Endothelial cell of umbilical vein (primary cell): ENCODE measurements at regions of chr17 and their contacts with region 1.

Region 1: GRCh38 chr17:42517516-42517915 is 18.5 kb upstream of the NAGLU start:
- DNase-seq: peak; percentile 90
- H3K4me3 ChIP-seq: no peak overlapping the region
- H3K27ac ChIP-seq: peak overlapping the region; percentile 100
- H3K4me1 ChIP-seq: peaks cover 51% of the 10 kb centered on the region
- H3K27me3 ChIP-seq: no peaks in the 10 kb centered on the region
- CTCF ChIP-seq: peak; percentile 92 to 98
- POLR2A ChIP-seq: peak; percentile 54

Region 2: GRCh38 chr17:42329025-42329976 is 188.2 kb before region 1 on chr17:
- CTCF ChIA-PET with region 1: interaction called, 190 read pairs
- POLR2A ChIA-PET with region 1: no interaction called
- dilution Hi-C with region 1: loop called (anchors 25 kb)
- intact Hi-C with region 1: no loop called
- DNase-seq: peak; percentile 69
- H3K4me3 ChIP-seq: no peak overlapping the region
- H3K27ac ChIP-seq: peak overlapping the region; percentile 35
- H3K4me1 ChIP-seq: peaks cover 14% of the 10 kb centered on the region
- H3K27me3 ChIP-seq: no peaks in the 10 kb centered on the region
- CTCF ChIP-seq: no peak
- POLR2A ChIP-seq: no peak

Region 3: GRCh38 chr17:42405963-42406495 is 111.5 kb before region 1 on chr17:
- CTCF ChIA-PET with region 1: interaction called, 81 read pairs
- POLR2A ChIA-PET with region 1: interaction called, 17 read pairs
- dilution Hi-C with region 1: no loop called
- intact Hi-C with region 1: loop called (anchors 1 kb)
- DNase-seq: peak; percentile 80
- H3K4me3 ChIP-seq: no peak overlapping the region
- H3K27ac ChIP-seq: no peak overlapping the region
- H3K4me1 ChIP-seq: peaks cover 58% of the 10 kb centered on the region
- H3K27me3 ChIP-seq: no peaks in the 10 kb centered on the region
- CTCF ChIP-seq: peak; percentile 75 to 85
- POLR2A ChIP-seq: no peak

Region 4: GRCh38 chr17:42428141-42428944 is 89.2 kb before region 1 on chr17:
- CTCF ChIA-PET with region 1: interaction called, 35 read pairs
- POLR2A ChIA-PET with region 1: interaction called, 38 read pairs
- dilution Hi-C with region 1: no loop called
- intact Hi-C with region 1: loop called (anchors 1 kb)
- DNase-seq: peak; percentile 85
- H3K4me3 ChIP-seq: no peak overlapping the region
- H3K27ac ChIP-seq: no peak overlapping the region
- H3K4me1 ChIP-seq: peaks cover 5% of the 10 kb centered on the region
- H3K27me3 ChIP-seq: no peaks in the 10 kb centered on the region
- CTCF ChIP-seq: peak; percentile 71 to 76
- POLR2A ChIP-seq: no peak

Region 5: DNA sequence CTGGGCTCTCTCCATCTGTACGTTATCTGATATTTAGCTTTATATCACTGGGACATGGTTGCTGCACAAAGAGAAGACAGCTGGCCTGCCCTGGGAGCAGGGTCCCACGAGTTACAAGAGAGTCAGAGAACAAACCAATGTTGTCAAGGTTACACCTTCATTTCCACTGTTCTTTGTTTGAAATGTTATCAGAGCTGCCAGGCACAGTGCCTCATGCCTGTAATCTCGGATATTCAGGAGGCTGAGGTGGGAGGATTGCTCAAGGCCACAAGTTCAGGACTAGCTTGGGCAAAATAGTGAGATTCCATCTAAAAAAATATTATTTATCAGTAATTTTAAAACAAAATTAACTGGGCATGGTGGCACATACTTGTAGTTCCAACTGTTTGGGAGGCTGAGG is 24.2 kb before region 1 on chr17:
- CTCF ChIA-PET with region 1: interaction called, 12 read pairs
- POLR2A ChIA-PET with region 1: no interaction called
- dilution Hi-C with region 1: no loop called
- intact Hi-C with region 1: no loop called
- DNase-seq: peak; percentile 33
- H3K4me3 ChIP-seq: no peak overlapping the region
- H3K27ac ChIP-seq: no peak overlapping the region
- H3K4me1 ChIP-seq: peaks cover 4% of the 10 kb centered on the region
- H3K27me3 ChIP-seq: no peaks in the 10 kb centered on the region
- CTCF ChIP-seq: no peak
- POLR2A ChIP-seq: no peak

Region 6: GRCh38 chr17:42704837-42705494 is 187.4 kb after region 1 on chr17:
- CTCF ChIA-PET with region 1: no interaction called
- POLR2A ChIA-PET with region 1: no interaction called
- dilution Hi-C with region 1: no loop called
- intact Hi-C with region 1: no loop called
- DNase-seq: no peak
- H3K4me3 ChIP-seq: no peak overlapping the region
- H3K27ac ChIP-seq: no peak overlapping the region
- H3K4me1 ChIP-seq: no peaks in the 10 kb centered on the region
- H3K27me3 ChIP-seq: no peaks in the 10 kb centered on the region
- CTCF ChIP-seq: no peak
- POLR2A ChIP-seq: no peak